ENCODE measurements at regions of chr10 and their contacts with region 1.

Region 1: GRCh38 chr10:71766702-71767419 is 6.5 kb downstream of the VSIR start:
- DNase-seq: peak; percentile 57
- CTCF ChIP-seq: no peak

Region 2: DNA sequence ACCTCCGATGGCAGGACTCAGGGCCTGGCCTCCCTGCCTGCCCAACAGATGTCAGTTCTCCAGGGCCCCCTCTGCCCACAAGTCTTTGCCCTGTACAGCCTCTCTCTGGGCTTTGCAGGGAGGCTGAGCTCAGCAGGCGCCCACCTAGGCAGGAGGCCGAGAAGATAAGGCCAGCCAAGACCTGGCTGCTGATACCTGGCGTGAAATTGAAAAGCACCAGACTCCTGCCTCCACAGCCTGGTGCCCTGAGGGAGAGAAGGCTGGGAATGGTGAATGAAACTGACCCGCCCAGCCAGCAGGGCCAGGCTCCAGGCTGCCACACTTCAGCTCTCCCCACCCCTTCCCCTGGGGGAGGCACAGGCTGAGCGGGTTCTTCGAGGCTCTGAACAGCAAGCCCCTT is 224.4 kb before region 1 on chr10:
- CTCF ChIA-PET with region 1: no interaction called
- POLR2A ChIA-PET with region 1: no interaction called
- DNase-seq: no peak
- CTCF ChIP-seq: no peak

Region 3: GRCh38 chr10:71756311-71757191 is 10.3 kb before region 1 on chr10:
- CTCF ChIA-PET with region 1: interaction called, 21 read pairs
- POLR2A ChIA-PET with region 1: no interaction called
- DNase-seq: no peak
- CTCF ChIP-seq: no peak